T-cell (primary cell): ENCODE measurements at regions of chr7 and their contacts with region 1.

Region 1: GRCh38 chr7:130178251-130178650 is 27.0 kb downstream of the TMEM209 start:
- DNase-seq: no peak
- ATAC-seq: no peak
- H3K4me3 ChIP-seq: no peak overlapping the region
- H3K4me3 Mint-ChIP-seq: no peak overlapping the region
- H3K27ac ChIP-seq: no peak overlapping the region
- H3K27ac Mint-ChIP-seq: no peak overlapping the region
- H3K4me1 ChIP-seq: no peaks in the 10 kb centered on the region
- H3K4me1 Mint-ChIP-seq: no peaks in the 10 kb centered on the region
- H3K27me3 ChIP-seq: no peaks in the 10 kb centered on the region
- H3K27me3 Mint-ChIP-seq: no peaks in the 10 kb centered on the region

Region 2: GRCh38 chr7:130242198-130243014 is 64.2 kb after region 1 on chr7:
- CTCF ChIA-PET with region 1: no interaction called
- POLR2A ChIA-PET with region 1: interaction called in 1 of 2 experiments, 12 read pairs
- DNase-seq: peak in 33 of 35 experiments; percentile 14 to 70 (median 41)
- ATAC-seq: peak; percentile 58 to 74 (median 70)
- H3K4me3 ChIP-seq: no peak overlapping the region
- H3K4me3 Mint-ChIP-seq: no peak overlapping the region
- H3K27ac ChIP-seq: no peak overlapping the region
- H3K27ac Mint-ChIP-seq: no peak overlapping the region
- H3K4me1 ChIP-seq: no peaks in the 10 kb centered on the region
- H3K4me1 Mint-ChIP-seq: peaks cover 0 to 7% (median 0%) of the 10 kb centered on the region in 3 donors
- H3K27me3 ChIP-seq: peaks cover 0 to 3% of the 10 kb centered on the region in 2 experiments
- H3K27me3 Mint-ChIP-seq: peaks cover 0 to 5% of the 10 kb centered on the region in 2 donors